HCT116 (cell line): ENCODE measurements at regions of chr1 and their contacts with region 1.

Region 1: DNA sequence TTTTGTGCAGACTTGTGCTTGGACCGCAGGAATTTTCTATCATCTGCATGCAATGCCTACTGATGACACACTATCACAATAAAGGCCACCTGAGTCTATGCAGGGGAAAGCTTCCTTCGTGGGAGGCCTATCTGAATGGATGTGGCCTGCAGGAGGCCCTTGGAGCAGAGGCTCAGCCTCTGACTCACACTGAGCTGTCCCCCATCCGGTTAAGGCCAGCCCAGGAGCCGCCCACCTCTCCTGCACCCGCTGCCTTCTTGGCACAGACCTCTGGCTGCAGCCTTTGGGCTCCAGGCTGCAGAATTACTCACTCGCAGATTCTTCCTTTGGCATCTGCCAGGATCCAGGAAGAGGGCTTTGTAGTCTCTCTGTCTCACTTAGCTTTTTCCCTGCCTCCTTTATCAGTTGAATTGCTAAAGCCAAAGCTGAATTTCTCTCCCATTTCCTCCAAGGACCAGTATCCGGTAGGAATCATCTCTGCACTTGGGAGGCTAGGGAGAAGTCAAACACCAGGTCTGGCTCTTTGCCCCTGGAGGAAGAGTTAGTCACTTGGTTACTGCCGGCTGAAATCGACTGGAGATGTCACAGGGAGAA is 65.1 kb upstream of the JUN start:
- DNase-seq: peak; percentile 94
- ATAC-seq: peak; percentile 97
- H3K4me3 ChIP-seq: peak overlapping the region in 1 of 2 experiments; percentile 39; a peak in 3 of 4 replicates
- H3K27ac ChIP-seq: peak overlapping the region; percentile 48
- H3K4me1 ChIP-seq: peaks cover 13 to 40% of the 10 kb centered on the region in 2 experiments
- H3K27me3 ChIP-seq: no peaks in the 10 kb centered on the region
- CTCF ChIP-seq: peak in 2 of 3 experiments; percentile 7 to 25; a peak in 3 of 6 replicates
- POLR2A ChIP-seq: no peak
- RAD21 ChIP-seq: peak; percentile 36

Region 2: GRCh38 chr1:58883037-58883887 is 34.3 kb after region 1 on chr1:
- CTCF ChIA-PET with region 1: no interaction called
- POLR2A ChIA-PET with region 1: no interaction called
- RAD21 ChIA-PET with region 1: no interaction called
- intact Hi-C with region 1: loop called (anchors 2 kb)
- DNase-seq: peak; percentile 85
- ATAC-seq: peak; percentile 63
- H3K4me3 ChIP-seq: peak overlapping the region in 1 of 2 experiments; percentile 14; a peak in 2 of 4 replicates
- H3K27ac ChIP-seq: peak overlapping the region; percentile 53
- H3K4me1 ChIP-seq: peaks cover 48 to 56% of the 10 kb centered on the region in 2 experiments
- H3K27me3 ChIP-seq: no peaks in the 10 kb centered on the region
- CTCF ChIP-seq: no peak
- POLR2A ChIP-seq: no peak
- RAD21 ChIP-seq: peak; percentile 34; the same call in 1 of the 2 replicates

Region 3: GRCh38 chr1:58903514-58904298 is 54.8 kb after region 1 on chr1:
- CTCF ChIA-PET with region 1: no interaction called
- POLR2A ChIA-PET with region 1: interaction called, 4 read pairs
- RAD21 ChIA-PET with region 1: no interaction called
- intact Hi-C with region 1: loop called (anchors 1 kb)
- DNase-seq: peak; percentile 55
- ATAC-seq: peak; percentile 94
- H3K4me3 ChIP-seq: peak overlapping the region; percentile 41 to 62
- H3K27ac ChIP-seq: peak overlapping the region; percentile 79
- H3K4me1 ChIP-seq: peaks cover 8 to 19% of the 10 kb centered on the region in 2 experiments; a peak in 3 of 4 replicates
- H3K27me3 ChIP-seq: no peaks in the 10 kb centered on the region
- CTCF ChIP-seq: no peak
- POLR2A ChIP-seq: peak; percentile 73
- RAD21 ChIP-seq: no peak